Ascending aorta (tissue), 2 donors: ENCODE measurements at regions of chr1 and their contacts with region 1.

Region 1: DNA sequence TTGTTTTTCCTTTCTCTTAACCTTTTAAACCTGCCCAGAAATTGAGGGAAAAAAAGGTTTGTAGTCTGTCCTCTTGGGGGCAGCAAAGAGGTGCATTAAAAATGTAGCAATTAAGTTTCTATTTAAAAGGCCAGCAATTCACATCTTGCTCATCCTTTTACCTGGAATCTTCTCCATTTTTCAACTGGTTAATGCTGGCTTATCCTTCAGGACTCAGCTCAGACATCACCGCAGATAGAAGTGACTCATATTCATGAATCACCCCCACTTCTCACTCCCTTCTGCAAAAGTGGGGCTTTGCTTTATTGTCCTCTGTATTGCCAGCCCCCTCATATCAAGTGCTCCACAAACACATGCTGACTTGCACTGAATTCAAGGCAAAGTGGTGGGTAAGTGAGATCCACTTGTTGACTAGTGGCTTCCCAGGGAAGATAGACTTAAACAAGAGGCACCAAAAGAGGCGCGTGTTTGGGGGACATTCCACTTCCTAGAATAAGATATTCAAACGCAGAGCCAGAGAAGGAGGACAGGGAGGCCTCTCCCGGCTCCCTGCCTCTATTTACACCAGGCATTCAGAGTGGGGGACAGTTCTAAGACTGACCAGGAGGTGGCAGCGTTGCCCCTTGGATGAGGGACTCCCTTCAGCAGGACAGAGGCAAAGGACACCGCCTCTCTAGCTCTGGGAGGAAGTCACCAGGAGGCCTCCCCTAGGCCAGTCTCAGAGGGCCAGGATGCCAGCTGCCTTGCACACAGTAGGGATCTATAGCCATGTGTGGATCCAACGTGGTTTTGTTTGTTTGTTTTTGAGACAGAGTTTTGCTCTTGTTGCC is 23.2 kb upstream of the ZNF648 start:
- DNase-seq: peak; percentile 63 to 93
- H3K4me3 ChIP-seq: no peak overlapping the region
- H3K27ac ChIP-seq: no peak overlapping the region
- H3K4me1 ChIP-seq: no peaks in the 10 kb centered on the region
- H3K27me3 ChIP-seq: no peaks in the 10 kb centered on the region
- CTCF ChIP-seq: peak; percentile 82 to 84 (median 82)

Region 2: DNA sequence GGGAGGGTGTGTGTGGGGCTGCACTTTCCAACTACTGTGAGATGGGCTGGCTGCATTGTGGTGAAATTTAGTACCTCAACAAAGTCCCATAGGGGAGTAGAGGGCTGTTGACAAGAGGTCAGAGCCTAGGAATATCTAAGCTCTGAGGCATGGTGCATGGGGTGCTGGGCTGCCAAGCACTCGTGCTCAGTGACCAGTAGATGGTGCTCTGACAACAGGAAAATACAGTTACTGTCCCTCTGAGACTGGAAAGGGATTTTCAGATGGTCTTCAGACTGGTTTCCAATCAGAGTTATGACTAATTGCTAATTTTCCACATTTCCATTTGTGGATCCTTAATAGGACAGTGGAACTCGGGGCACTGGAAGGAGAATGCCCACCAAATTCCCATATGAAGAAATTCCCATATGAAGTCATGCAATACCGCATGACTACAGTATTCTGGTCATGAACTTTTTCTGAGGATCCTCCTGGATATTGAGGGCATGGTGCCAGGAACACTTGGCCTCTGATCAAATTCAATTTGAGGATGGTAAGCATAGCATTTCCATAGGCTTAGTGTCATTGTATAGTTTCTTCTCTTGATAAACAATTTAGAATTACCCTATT is 605.5 kb before region 1 on chr1:
- intact Hi-C with region 1: loop called (anchors 10 kb)
- DNase-seq: no peak
- H3K4me3 ChIP-seq: no peak overlapping the region
- H3K27ac ChIP-seq: no peak overlapping the region
- H3K4me1 ChIP-seq: no peaks in the 10 kb centered on the region
- H3K27me3 ChIP-seq: peaks cover 6% of the 10 kb centered on the region
- CTCF ChIP-seq: peak; percentile 27 to 49 (median 40)

Region 3: DNA sequence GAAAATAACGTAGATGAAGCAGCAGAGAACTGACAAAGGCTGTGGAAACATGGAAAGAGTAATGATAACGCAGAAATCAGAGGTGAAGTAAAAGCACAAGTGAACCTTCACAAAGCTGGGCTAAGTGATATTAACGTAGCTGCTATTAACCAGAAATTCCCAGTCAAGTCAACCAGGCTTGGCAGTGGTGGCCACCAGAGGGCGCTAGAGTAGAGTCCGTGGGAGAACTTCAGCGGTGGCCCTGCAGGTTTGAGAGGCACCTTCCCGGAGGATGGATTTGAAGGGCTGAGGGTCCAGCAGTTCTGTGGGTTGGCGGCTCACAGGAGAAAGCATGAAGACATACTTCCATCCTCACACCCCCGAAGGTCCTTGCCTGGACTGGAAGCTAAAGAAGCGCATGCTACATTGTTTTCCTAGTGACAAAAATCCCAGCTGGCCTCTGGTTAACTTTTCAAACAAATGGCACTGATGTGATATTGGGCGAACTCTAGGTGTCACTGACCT is 58.5 kb after region 1 on chr1:
- intact Hi-C with region 1: loop called (anchors 5 kb)
- DNase-seq: peak; percentile 69 to 96
- H3K4me3 ChIP-seq: no peak overlapping the region
- H3K27ac ChIP-seq: peak overlapping the region; percentile 79 to 91
- H3K4me1 ChIP-seq: peaks cover 5 to 27% of the 10 kb centered on the region in 2 donors
- H3K27me3 ChIP-seq: no peaks in the 10 kb centered on the region
- CTCF ChIP-seq: peak; percentile 81 to 94 (median 87)

Region 4: GRCh38 chr1:182589931-182590330 is 505.2 kb after region 1 on chr1:
- intact Hi-C with region 1: loop called (anchors 5 kb)
- DNase-seq: no peak
- H3K4me3 ChIP-seq: no peak overlapping the region
- H3K27ac ChIP-seq: peak overlapping the region in 1 of 2 donors; percentile 91
- H3K4me1 ChIP-seq: peaks cover 0 to 12% of the 10 kb centered on the region in 2 donors
- H3K27me3 ChIP-seq: no peaks in the 10 kb centered on the region
- CTCF ChIP-seq: no peak

Region 5: DNA sequence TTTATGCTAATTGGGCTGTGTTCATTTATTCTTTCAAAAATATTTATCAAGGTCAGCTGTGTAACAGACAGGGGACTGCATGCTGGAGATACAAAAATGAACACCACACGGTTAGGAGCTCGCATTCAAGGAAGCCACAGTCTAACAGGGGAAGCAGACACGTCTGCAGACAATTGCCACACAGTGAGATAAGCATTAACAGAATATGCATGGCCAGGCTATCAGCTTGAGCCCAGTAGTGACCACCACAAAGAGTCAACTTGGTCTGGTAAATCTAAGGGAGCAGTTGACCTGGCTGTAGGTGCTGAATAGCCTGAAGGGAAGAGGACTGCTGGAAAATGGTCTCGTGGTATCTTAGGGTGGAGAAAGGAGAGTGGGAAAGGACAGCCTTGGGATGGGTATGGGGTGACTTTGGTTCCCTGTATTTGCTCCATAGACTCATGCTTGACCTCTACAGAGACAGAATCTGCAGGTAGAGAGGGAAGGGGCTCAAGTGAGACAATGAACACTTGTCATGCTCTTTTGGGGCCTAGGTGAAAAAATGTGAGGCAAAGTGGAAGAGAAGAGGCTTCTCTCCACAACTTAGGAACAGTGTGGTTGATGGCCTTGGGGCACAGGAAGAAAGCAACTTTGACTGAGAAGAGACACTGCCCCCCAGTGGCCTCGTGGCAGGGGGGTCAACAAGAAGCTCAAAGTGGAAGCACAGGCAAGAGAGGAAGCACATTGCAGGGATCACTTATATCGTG is 697.3 kb after region 1 on chr1:
- intact Hi-C with region 1: loop called (anchors 2 kb)
- DNase-seq: peak; percentile 14 to 84
- H3K4me3 ChIP-seq: no peak overlapping the region
- H3K27ac ChIP-seq: no peak overlapping the region
- H3K4me1 ChIP-seq: no peaks in the 10 kb centered on the region
- H3K27me3 ChIP-seq: no peaks in the 10 kb centered on the region
- CTCF ChIP-seq: peak; percentile 33 to 63 (median 55)